Panc1 (cell line): ENCODE measurements at regions of chr3 and their contacts with region 1.

Region 1: DNA sequence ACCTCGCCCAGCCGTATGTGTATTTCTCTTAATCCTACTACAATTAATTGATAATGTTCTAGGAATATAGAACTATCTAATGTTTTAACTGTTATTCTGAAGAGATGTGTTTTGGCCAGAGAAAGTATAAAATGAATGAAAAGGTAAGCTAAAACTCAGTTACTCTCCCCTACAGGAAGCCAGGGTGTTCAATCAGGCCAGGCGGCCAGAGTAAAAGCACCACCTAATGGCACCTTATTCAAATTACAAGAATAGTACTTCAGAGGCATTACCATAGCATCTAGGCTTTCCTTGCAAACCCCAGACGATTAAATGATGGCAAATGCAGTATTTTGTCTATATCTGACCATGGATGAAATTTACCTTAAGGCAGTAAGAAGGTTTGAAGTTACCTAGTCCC is 10.4 kb downstream of the SLC12A8 start:
- DNase-seq: no peak
- ATAC-seq: peak; percentile 91
- H3K4me3 ChIP-seq: no peak overlapping the region
- H3K27ac ChIP-seq: no peak overlapping the region
- H3K4me1 ChIP-seq: no peaks in the 10 kb centered on the region
- H3K27me3 ChIP-seq: no peaks in the 10 kb centered on the region
- CTCF ChIP-seq: peak; percentile 72

Region 2: GRCh38 chr3:124928333-124929202 is 273.6 kb before region 1 on chr3:
- CTCF ChIA-PET with region 1: interaction called, 3 read pairs
- POLR2A ChIA-PET with region 1: no interaction called
- in situ Hi-C with region 1: no loop called
- intact Hi-C with region 1: loop called (anchors 1 kb)
- DNase-seq: peak; percentile 54
- ATAC-seq: peak; percentile 91
- H3K4me3 ChIP-seq: no peak overlapping the region
- H3K27ac ChIP-seq: no peak overlapping the region
- H3K4me1 ChIP-seq: no peaks in the 10 kb centered on the region
- H3K27me3 ChIP-seq: no peaks in the 10 kb centered on the region
- CTCF ChIP-seq: peak; percentile 87

Region 3: DNA sequence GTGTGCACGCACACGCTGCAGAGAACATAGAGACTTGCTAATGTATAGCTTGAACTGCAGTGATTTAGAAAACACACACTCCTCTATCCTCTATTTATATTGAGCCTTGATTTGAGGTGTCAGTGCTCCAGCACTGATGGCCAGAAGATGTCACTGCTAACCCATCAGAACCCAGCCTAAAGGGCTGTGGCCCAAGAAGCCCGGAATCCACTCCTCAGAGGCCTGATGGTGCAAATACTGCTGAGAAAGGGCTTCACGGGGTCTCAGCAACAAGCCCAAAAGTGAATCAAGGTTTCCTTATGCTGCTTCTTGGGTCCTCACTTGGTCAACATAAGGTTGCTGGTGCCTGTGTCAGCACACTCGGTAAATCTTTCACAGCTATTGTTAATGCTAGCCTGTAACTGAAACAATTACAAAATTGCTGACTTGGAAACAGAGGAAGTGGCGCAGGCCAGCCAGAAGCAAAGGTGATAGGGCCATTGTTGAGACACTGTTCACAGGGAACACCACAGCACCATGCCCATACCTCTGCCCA is 206.7 kb before region 1 on chr3:
- CTCF ChIA-PET with region 1: interaction called, 3 read pairs
- POLR2A ChIA-PET with region 1: no interaction called
- in situ Hi-C with region 1: no loop called
- intact Hi-C with region 1: loop called (anchors 10 kb)
- DNase-seq: peak; percentile 27
- ATAC-seq: peak; percentile 90
- H3K4me3 ChIP-seq: no peak overlapping the region
- H3K27ac ChIP-seq: peak overlapping the region; percentile 25; the same call in 1 of the 2 replicates
- H3K4me1 ChIP-seq: peaks cover 14% of the 10 kb centered on the region; the same call in 1 of the 2 replicates
- H3K27me3 ChIP-seq: no peaks in the 10 kb centered on the region
- CTCF ChIP-seq: peak; percentile 85

Region 4: DNA sequence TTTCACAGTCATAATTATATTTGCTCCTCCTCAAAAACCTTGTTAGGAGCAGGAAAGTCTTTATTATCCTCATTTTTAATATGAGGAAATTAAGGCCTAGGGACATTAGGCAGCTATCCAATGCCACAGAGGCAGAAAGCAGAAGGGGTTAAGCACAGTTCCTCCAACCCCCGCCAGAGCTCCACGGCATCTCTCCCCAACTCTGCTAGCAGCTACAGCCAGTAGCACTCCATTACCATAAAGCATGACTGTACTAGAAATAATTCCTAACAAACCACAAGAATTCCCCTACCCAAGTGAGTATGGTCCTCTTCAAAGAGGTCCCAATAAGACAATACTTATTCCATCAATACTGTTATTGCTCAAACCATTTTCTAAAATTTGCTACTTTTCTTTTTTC is 156.2 kb before region 1 on chr3:
- CTCF ChIA-PET with region 1: no interaction called
- POLR2A ChIA-PET with region 1: no interaction called
- in situ Hi-C with region 1: no loop called
- intact Hi-C with region 1: no loop called
- DNase-seq: no peak
- ATAC-seq: peak; percentile 62
- H3K4me3 ChIP-seq: no peak overlapping the region
- H3K27ac ChIP-seq: peak overlapping the region; percentile 39; the same call in 1 of the 2 replicates
- H3K4me1 ChIP-seq: peaks cover 65% of the 10 kb centered on the region
- H3K27me3 ChIP-seq: no peaks in the 10 kb centered on the region
- CTCF ChIP-seq: no peak